Endothelial cell of umbilical vein (primary cell): ENCODE measurements at regions of chr10 and their contacts with region 1.

Region 1: DNA sequence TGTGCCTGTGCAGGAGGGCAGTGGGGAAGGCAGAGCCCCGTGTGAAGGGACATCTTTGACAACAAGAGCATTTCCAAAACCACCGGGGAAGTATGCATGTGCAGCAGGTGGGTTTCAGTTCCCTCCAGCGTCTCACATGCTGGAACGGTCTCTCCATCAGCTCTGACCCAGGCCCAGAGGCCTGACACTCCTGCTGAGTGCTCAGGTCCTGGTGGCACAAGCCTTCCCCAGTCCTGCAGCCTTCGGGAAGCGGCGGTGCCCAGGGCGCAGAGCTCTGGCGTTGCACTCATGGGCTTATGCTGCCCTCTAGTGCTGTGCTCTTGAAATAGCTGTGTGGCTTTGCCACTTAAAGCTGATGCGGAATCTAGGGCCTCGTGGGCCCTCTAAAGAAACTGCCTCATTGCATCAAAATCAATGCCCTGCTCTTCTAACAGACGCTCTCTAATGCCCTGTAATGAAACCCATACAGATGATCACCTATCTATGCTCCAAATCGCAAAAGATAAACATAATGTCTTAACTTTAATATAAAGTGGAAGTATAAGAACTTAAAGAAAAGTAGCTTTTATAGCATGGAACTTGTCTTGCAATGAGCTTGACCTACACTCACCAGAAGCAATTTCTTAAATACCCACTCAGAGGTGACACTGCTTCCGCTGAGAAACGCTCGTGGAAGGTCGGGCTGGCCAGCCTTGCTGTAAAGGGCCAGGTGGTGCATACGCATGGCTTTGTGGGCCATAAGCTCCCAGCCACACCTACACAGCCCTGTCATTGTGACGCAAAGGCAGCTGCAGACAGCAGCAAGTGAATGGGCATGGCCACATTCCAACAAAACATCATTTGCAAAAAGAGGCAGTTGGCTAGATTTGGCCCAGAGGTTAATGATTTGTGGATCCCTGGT is 38.6 kb downstream of the CLRN3 start:
- DNase-seq: peak; percentile 63
- H3K4me3 ChIP-seq: no peak overlapping the region
- H3K27ac ChIP-seq: no peak overlapping the region
- H3K4me1 ChIP-seq: no peaks in the 10 kb centered on the region
- H3K27me3 ChIP-seq: no peaks in the 10 kb centered on the region
- CTCF ChIP-seq: peak; percentile 71 to 83
- POLR2A ChIP-seq: no peak

Region 2: DNA sequence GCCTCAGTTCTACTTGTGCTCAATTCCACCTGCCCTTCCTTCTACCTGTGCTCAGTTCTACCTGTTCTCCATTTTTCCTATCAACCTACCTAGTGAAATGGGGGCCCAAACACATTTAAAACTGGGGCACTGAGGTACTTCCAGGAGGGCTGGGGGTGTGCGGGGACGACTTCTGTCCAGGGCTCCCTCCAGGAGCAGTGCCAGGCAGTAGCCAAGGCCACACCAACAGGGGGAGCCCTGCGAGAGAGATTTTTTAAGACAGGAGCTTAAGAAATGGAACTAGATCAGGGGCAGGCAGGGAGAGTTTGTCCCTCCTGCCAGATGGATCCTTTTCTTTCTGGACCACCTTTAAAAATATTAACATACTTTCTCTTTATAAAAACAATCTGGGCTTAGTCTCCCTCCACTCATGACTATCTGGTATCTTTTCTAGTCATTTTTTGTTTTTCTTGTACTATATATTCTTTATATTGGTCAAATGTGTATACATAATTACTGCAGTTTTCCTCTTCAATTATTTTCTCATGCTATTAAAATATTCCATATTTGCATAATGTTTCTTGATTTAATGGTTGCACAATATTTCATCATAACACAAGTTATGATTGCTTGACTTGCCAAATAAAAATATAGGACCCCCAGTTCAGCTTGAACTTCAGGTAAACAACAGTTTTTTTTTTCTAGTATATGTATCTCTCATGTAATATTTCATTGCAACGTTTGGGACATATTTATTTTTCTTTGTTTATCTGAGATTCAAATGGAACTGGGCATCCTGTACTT is 610.4 kb before region 1 on chr10:
- CTCF ChIA-PET with region 1: interaction called, 15 read pairs
- POLR2A ChIA-PET with region 1: no interaction called
- dilution Hi-C with region 1: no loop called
- intact Hi-C with region 1: loop called (anchors 10 kb)
- DNase-seq: peak; percentile 58
- H3K4me3 ChIP-seq: no peak overlapping the region
- H3K27ac ChIP-seq: no peak overlapping the region
- H3K4me1 ChIP-seq: no peaks in the 10 kb centered on the region
- H3K27me3 ChIP-seq: no peaks in the 10 kb centered on the region
- CTCF ChIP-seq: peak; percentile 67 to 77
- POLR2A ChIP-seq: no peak

Region 3: GRCh38 chr10:127563718-127564553 is 290.2 kb before region 1 on chr10:
- CTCF ChIA-PET with region 1: interaction called, 14 read pairs
- POLR2A ChIA-PET with region 1: no interaction called
- dilution Hi-C with region 1: no loop called
- intact Hi-C with region 1: loop called (anchors 1 kb)
- DNase-seq: no peak
- H3K4me3 ChIP-seq: no peak overlapping the region
- H3K27ac ChIP-seq: no peak overlapping the region
- H3K4me1 ChIP-seq: no peaks in the 10 kb centered on the region
- H3K27me3 ChIP-seq: no peaks in the 10 kb centered on the region
- CTCF ChIP-seq: peak; percentile 69 to 73
- POLR2A ChIP-seq: no peak

Region 4: GRCh38 chr10:127679642-127680255 is 174.4 kb before region 1 on chr10:
- CTCF ChIA-PET with region 1: interaction called, 19 read pairs
- POLR2A ChIA-PET with region 1: no interaction called
- dilution Hi-C with region 1: no loop called
- intact Hi-C with region 1: loop called (anchors 1 kb)
- DNase-seq: no peak
- H3K4me3 ChIP-seq: no peak overlapping the region
- H3K27ac ChIP-seq: no peak overlapping the region
- H3K4me1 ChIP-seq: no peaks in the 10 kb centered on the region
- H3K27me3 ChIP-seq: no peaks in the 10 kb centered on the region
- CTCF ChIP-seq: peak in 1 of 2 donors; percentile 36
- POLR2A ChIP-seq: no peak

Region 5: DNA sequence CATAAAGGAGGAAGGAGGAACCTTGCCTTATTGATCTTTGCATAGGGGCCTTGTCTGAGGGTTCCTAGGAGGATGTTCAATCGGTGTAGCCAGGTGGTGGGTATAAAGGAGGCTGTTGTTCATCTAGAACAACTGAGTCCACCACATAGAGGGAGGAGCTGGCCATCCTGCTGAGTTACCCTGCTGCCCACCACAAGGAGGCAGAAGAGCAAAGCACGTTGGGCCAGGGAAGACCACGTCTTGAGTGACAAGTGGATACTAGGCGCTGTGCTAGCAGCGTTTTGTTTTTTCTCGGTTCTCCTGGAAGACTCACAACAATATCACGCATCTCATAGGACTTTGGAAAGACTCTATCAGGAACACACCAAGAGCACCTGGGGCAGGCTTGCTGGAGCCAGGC is 97.1 kb before region 1 on chr10:
- CTCF ChIA-PET with region 1: interaction called, 21 read pairs
- POLR2A ChIA-PET with region 1: no interaction called
- dilution Hi-C with region 1: no loop called
- intact Hi-C with region 1: no loop called
- DNase-seq: no peak
- H3K4me3 ChIP-seq: no peak overlapping the region
- H3K27ac ChIP-seq: no peak overlapping the region
- H3K4me1 ChIP-seq: no peaks in the 10 kb centered on the region
- H3K27me3 ChIP-seq: no peaks in the 10 kb centered on the region
- CTCF ChIP-seq: peak in 1 of 2 donors; percentile 32
- POLR2A ChIP-seq: no peak